Prostate gland (tissue), 2 donors: ENCODE measurements at regions of chr17 and their contacts with region 1.

Region 1: GRCh38 chr17:55295411-55296170 is 30.8 kb downstream of the HLF start:
- DNase-seq: peak; percentile 55
- H3K4me3 ChIP-seq: no peak overlapping the region
- H3K27ac ChIP-seq: peak overlapping the region in 1 of 2 donors; percentile 24
- H3K4me1 ChIP-seq: no peaks in the 10 kb centered on the region
- H3K27me3 ChIP-seq: no peaks in the 10 kb centered on the region
- CTCF ChIP-seq: peak; percentile 80 to 87 (median 84)
- POLR2A ChIP-seq: no peak

Region 2: DNA sequence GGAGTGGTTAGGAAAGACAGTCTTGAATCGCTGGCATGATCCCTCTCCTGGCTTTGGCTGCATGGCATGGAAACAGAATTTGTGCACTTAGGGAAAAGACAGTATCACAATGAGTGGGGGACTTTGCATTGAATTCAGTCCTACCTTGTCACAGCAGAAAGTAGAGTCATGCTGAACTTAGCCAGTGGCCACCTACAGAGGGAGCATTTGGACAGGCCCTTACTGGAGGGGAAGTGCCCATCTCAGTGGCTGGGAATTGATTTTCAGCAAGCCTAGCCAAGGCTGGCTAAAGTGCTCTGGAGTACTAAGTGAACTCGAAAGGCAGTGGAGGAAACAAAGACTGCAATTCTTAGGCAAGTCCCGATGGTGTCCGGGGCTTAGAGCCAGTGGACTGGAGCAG is 759.3 kb before region 1 on chr17:
- intact Hi-C with region 1: no loop called
- DNase-seq: no peak
- H3K4me3 ChIP-seq: no peak overlapping the region
- H3K27ac ChIP-seq: no peak overlapping the region
- H3K4me1 ChIP-seq: no peaks in the 10 kb centered on the region
- H3K27me3 ChIP-seq: no peaks in the 10 kb centered on the region
- CTCF ChIP-seq: no peak
- POLR2A ChIP-seq: no peak

Region 3: GRCh38 chr17:54992797-54993639 is 302.6 kb before region 1 on chr17:
- intact Hi-C with region 1: loop called (anchors 10 kb)
- DNase-seq: peak; percentile 23
- H3K4me3 ChIP-seq: no peak overlapping the region
- H3K27ac ChIP-seq: no peak overlapping the region
- H3K4me1 ChIP-seq: no peaks in the 10 kb centered on the region
- H3K27me3 ChIP-seq: no peaks in the 10 kb centered on the region
- CTCF ChIP-seq: peak; percentile 26 to 66 (median 63)
- POLR2A ChIP-seq: no peak

Region 4: DNA sequence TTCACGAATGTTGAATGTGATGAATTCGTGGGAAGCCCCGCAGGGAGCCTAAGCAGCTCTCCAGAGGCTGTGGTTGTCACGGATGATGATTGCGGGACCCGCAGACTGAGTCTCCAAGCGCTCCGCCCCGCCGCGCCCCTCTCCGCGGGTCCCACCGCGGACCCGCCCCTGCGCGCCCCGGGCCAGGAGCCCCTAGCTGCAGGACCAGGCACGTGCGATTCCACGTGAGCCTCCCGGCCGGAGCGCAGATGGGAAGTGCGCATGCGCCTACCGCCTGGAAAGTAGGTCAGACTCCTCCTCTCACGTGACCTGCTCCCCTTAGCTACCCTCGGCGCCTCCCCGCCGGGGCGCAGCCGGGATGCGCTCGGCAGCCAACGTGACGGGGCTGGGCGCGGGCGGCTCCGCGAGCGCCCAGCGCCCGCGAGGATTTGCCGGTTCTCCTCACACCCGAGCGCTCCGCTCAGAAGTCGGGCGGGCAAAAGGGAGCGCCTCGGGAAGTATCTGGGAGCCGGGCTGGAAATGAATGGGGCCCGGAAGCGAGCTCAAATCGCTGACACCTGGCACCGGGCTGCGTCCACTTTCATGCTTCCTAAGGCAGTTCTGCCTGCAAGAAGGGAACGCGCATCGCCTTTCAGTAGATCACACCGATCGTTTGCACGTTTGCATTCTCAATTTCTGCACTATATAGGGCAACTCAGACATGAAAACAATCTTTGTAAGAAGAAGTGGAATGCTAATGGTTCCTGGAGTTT is 57.2 kb before region 1 on chr17:
- intact Hi-C with region 1: loop called (anchors 5 kb)
- DNase-seq: peak; percentile 94
- H3K4me3 ChIP-seq: peak overlapping the region; percentile 33
- H3K27ac ChIP-seq: peak overlapping the region; percentile 61 to 79
- H3K4me1 ChIP-seq: no peaks in the 10 kb centered on the region
- H3K27me3 ChIP-seq: no peaks in the 10 kb centered on the region
- CTCF ChIP-seq: peak in 2 of 4 experiments; percentile 30 to 33
- POLR2A ChIP-seq: peak; percentile 28

Region 5: DNA sequence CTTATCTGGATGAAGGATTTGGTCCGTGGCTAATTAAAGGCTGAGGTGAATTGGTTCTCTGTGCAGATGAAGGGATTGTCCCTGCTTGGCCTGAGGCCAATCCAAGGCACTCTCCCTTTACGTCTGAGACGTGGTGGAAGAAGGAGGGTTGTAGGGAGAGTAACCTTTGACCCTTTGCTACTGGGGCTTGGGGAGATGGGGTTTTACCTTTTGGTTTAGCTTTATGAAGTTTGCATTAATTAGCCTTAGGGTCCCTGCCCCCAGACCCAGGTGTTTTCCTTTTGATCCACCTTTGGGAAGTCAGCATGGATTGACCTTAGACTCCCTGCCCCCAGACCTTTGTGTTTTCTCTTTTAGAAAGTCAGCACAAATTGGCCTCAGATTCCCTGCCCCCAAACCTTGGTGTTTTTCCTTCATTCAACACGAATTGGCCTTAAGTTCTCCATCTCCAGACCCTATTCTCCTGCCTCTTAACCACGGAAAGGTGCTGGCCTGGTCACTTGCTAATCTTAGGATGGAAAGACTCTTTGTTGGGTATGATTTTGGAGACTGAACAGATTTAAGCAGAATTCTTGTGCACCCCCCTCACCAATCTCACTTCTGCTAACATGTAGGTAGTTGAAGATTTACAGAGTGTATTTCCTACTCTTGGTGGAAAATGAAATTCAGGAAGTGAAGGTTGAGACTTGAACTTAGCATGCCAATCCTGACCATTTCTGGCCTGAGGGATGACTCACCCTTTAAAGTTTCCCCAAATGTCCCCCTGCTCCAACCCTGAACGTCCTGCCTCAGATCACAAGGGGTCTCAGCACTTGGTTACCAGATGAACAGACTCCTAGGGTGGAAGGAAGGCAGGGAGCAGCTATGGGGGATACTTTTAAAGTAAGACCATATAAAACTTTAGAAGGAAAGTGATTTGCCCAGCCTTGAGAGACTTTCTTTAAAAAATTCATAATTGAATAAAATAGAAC is 149.2 kb after region 1 on chr17:
- intact Hi-C with region 1: loop called (anchors 10 kb)
- DNase-seq: no peak
- H3K4me3 ChIP-seq: no peak overlapping the region
- H3K27ac ChIP-seq: no peak overlapping the region
- H3K4me1 ChIP-seq: no peaks in the 10 kb centered on the region
- H3K27me3 ChIP-seq: no peaks in the 10 kb centered on the region
- CTCF ChIP-seq: no peak
- POLR2A ChIP-seq: no peak